Caco-2 (cell line): ENCODE measurements at regions of chr4 and their contacts with region 1.

Region 1: DNA sequence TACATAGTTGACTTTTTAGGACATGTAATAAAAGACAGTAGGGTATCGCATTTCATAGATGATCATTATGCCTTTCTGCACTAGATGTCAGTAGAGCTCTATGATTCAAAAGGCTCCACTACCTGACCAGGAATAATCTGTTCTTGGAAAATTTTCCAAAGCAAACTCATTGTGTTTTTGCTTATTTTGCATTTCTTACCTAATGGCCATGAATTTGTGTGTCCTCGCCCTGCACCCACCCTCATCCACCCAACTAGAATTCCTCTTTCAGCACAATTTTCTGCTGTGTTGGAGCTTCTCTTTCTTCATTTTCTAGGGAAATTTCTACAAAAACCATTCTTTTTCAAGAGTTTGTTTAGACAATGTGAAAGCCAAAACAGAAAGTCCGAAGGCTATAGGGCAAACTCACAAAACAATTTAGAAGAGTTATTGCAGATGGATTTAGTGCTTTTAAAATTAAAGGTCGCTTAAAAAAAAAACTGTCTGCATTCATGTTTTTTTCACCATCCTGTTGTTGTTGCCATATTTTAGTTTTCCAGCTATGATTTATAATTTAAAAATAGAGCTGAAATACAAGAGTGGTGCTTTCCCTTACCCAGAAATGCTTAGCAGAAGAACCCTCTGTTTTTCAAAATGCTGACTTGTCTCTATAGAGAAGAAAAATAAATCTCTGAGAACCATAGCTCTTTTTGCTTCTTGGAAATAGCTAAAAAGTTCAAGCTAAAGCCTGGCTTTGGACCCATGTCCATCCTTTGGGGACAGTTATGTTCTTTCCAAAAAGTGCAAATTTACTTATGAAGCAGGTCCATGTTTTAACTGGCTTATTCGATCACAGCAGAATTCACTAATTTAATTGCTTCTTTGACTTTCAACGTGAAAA is 183.7 kb downstream of the SPATA18 start:
- DNase-seq: peak in 1 of 2 experiments; percentile 34
- H3K4me3 ChIP-seq: no peak overlapping the region
- H3K4me3 Mint-ChIP-seq: no peak overlapping the region
- H3K27ac Mint-ChIP-seq: no peak overlapping the region
- H3K4me1 ChIP-seq: no peaks in the 10 kb centered on the region
- H3K4me1 Mint-ChIP-seq: no peaks in the 10 kb centered on the region
- H3K27me3 ChIP-seq: no peaks in the 10 kb centered on the region
- H3K27me3 Mint-ChIP-seq: peaks cover 8% of the 10 kb centered on the region
- CTCF ChIP-seq: peak; percentile 43 to 57

Region 2: DNA sequence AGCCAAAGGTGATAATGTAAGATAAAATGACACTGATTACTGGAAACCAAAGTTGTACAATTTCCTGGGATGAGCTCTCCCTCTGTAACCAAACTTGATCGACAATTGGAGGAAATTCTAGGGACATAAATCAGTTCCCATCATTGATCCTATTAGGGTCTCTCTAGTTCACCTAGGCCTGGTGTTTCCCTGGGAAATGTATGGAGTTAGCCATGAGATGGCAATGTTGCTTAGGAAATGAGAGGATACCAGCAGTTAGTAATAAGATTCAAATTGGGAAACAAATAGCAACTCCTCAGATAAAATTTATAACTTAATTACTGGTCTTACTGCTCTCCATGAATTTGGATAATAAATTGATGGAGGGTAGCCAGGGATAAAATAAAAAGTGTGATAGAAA is 131.5 kb before region 1 on chr4:
- CTCF ChIA-PET with region 1: no interaction called
- POLR2A ChIA-PET with region 1: no interaction called
- intact Hi-C with region 1: loop called (anchors 10 kb)
- DNase-seq: no peak
- H3K4me3 ChIP-seq: no peak overlapping the region
- H3K4me3 Mint-ChIP-seq: no peak overlapping the region
- H3K27ac Mint-ChIP-seq: no peak overlapping the region
- H3K4me1 ChIP-seq: no peaks in the 10 kb centered on the region
- H3K4me1 Mint-ChIP-seq: no peaks in the 10 kb centered on the region
- H3K27me3 ChIP-seq: no peaks in the 10 kb centered on the region
- H3K27me3 Mint-ChIP-seq: no peaks in the 10 kb centered on the region
- CTCF ChIP-seq: peak in 1 of 2 experiments; percentile 20

Region 3: GRCh38 chr4:52368895-52369294 is 134.1 kb after region 1 on chr4:
- CTCF ChIA-PET with region 1: no interaction called
- POLR2A ChIA-PET with region 1: no interaction called
- intact Hi-C with region 1: loop called (anchors 2 kb)
- DNase-seq: no peak
- H3K4me3 ChIP-seq: no peak overlapping the region
- H3K4me3 Mint-ChIP-seq: no peak overlapping the region
- H3K27ac Mint-ChIP-seq: no peak overlapping the region
- H3K4me1 ChIP-seq: peaks cover 22% of the 10 kb centered on the region
- H3K4me1 Mint-ChIP-seq: peaks cover 4% of the 10 kb centered on the region
- H3K27me3 ChIP-seq: no peaks in the 10 kb centered on the region
- H3K27me3 Mint-ChIP-seq: no peaks in the 10 kb centered on the region
- CTCF ChIP-seq: no peak

Region 4: DNA sequence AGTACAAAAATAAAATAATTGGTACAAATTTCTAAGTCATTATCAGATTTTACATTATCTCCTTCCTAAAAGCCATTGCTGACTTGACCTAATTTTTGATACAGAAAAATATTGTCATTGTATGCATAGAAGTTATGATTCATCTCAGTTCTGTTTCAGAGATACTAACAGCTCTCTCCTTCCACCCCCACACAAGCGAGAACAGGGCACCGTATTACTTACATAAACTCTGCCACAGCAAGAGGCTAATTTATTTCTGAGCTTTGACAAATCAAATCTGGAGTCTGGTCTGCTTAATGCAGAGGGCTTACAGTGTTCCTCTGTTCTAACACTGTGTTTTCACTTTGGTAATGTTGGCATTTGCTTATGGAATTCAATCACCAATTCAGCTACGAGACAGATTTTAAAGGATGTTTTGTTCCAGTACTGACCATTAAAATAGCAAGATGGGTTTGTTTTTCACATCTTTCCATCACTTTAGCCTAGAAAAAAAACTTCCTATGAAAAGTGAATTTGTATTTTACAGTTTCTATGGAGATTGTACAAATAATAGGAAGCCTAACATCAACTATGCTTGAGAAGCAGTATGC is 242.5 kb after region 1 on chr4:
- CTCF ChIA-PET with region 1: no interaction called
- POLR2A ChIA-PET with region 1: no interaction called
- intact Hi-C with region 1: no loop called
- DNase-seq: no peak
- H3K4me3 ChIP-seq: no peak overlapping the region
- H3K4me3 Mint-ChIP-seq: no peak overlapping the region
- H3K27ac Mint-ChIP-seq: no peak overlapping the region
- H3K4me1 ChIP-seq: no peaks in the 10 kb centered on the region
- H3K4me1 Mint-ChIP-seq: no peaks in the 10 kb centered on the region
- H3K27me3 ChIP-seq: no peaks in the 10 kb centered on the region
- H3K27me3 Mint-ChIP-seq: peaks cover 9% of the 10 kb centered on the region
- CTCF ChIP-seq: no peak